Calu3 (cell line): ENCODE measurements at regions of chr19 and their contacts with region 1.

Region 1: GRCh38 chr19:17938092-17938845 is 5.5 kb downstream of the CCDC124 start:
- DNase-seq: peak; percentile 76
- H3K4me3 Mint-ChIP-seq: no peak overlapping the region
- H3K27ac Mint-ChIP-seq: no peak overlapping the region
- H3K4me1 Mint-ChIP-seq: peaks cover 7% of the 10 kb centered on the region
- H3K27me3 Mint-ChIP-seq: no peaks in the 10 kb centered on the region
- CTCF ChIP-seq: peak; percentile 71

Region 2: DNA sequence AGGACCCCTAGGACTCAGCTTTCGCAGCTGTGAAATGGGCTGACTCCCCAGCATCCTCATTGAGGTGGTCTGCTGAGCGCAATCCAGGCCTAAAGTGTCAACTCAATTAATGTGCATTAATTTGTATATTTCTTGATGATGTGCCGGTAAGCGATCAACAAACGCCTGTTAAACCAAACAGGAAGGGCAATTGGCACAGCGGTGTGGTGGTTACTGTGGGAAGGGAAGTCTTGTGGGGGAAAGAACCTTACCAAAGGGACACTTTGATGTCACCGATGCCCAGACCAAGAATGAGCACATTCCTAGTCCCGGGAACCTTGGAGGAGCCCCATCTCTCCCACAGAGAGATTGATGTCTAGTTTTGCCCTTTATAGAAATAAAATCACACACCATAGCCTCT is 92.1 kb before region 1 on chr19:
- CTCF ChIA-PET with region 1: no interaction called
- intact Hi-C with region 1: no loop called
- DNase-seq: no peak
- H3K4me3 Mint-ChIP-seq: no peak overlapping the region
- H3K27ac Mint-ChIP-seq: no peak overlapping the region
- H3K4me1 Mint-ChIP-seq: peaks cover 10% of the 10 kb centered on the region
- H3K27me3 Mint-ChIP-seq: peaks cover 13% of the 10 kb centered on the region
- CTCF ChIP-seq: no peak

Region 3: DNA sequence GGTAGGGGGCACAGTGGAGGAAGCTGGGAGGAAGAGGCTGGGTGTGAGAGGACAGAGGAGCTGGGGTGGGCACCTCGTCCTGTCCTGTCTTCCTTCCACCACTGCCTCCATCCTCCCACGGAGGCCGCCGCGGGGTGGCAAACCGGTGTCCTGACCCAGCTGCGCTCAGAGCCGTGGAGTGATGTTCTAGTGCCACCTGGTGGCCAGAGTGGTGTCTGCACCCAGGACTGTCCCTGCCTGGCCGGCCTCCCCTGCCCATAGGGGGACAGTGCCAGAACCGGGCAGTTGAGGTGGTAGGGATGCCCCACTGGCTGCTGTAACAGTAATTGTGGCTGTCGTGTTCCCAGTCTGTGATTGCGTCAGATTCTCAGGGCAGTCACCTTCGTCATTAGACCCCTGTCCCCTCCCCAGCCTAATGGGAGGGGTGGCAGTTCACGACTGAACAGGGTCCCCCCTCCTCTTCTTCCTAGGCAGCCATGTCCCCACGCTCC is 58.6 kb after region 1 on chr19:
- CTCF ChIA-PET with region 1: interaction called, 29 read pairs
- intact Hi-C with region 1: loop called (anchors 1 kb)
- DNase-seq: peak; percentile 87
- H3K4me3 Mint-ChIP-seq: no peak overlapping the region
- H3K27ac Mint-ChIP-seq: no peak overlapping the region
- H3K4me1 Mint-ChIP-seq: peaks cover 8% of the 10 kb centered on the region
- H3K27me3 Mint-ChIP-seq: no peaks in the 10 kb centered on the region
- CTCF ChIP-seq: peak; percentile 84